ENCODE measurements at regions of chr2 and their contacts with region 1.

Region 1: DNA sequence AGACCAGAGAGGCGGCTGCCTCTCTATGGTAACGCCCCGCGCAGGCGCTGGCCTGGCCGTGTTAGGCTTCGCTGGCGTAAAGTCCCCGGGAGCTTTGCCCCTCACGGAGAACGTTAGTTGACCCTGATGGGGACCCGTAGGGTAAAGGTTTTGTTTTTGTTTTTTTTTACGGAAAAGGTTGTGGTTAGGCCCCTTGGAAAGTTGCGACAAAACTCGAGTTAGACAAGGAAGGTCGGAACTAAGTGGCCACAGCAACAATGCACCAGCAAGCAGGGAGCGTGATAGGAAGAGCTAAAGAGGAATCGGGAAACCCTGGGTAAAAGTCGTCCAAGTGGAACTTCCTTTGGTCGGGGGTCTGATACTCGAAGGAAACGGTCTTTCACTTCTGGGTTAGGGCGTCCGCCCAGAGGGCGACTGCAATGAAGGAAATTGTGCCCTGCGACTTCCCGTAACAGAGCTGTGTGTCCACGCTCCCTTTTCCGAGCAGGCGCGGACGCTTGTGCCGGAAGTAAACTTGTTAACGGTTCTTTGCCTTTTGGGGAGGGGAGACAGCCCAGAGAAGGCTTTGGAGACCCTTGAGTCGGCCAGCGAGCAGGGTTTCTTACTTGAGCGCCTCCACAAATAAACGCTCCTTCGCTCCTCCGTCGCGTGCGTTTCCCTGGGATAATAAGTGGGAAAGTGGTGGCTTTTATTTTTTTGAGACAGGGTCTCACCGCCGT is 493 bp upstream of the CLASP1 start:
- DNase-seq: peak; percentile 97 to 98 (median 97)
- H3K4me3 ChIP-seq: peak overlapping the region; percentile 78 to 95 (median 87)
- H3K4me3 Mint-ChIP-seq: peak overlapping the region; percentile 90 to 93
- H3K27ac ChIP-seq: peak overlapping the region; percentile 93 to 100
- H3K27ac Mint-ChIP-seq: peak overlapping the region; percentile 97 to 99 (median 99)
- H3K4me1 ChIP-seq: peaks cover 23 to 35% of the 10 kb centered on the region in 2 donors
- H3K4me1 Mint-ChIP-seq: peaks cover 54% of the 10 kb centered on the region
- H3K27me3 ChIP-seq: no peaks in the 10 kb centered on the region
- H3K27me3 Mint-ChIP-seq: peaks cover 0 to 1% (median 0%) of the 10 kb centered on the region in 3 donors
- CTCF ChIP-seq: no peak

Region 2: GRCh38 chr2:121596221-121597080 is 53.3 kb before region 1 on chr2:
- intact Hi-C with region 1: loop called in 1 of 2 experiments (anchors 5 kb)
- DNase-seq: peak; percentile 80 to 89 (median 84)
- H3K4me3 ChIP-seq: peak overlapping the region; percentile 31 to 88 (median 82)
- H3K4me3 Mint-ChIP-seq: peak overlapping the region; percentile 74 to 90
- H3K27ac ChIP-seq: peak overlapping the region; percentile 55 to 97
- H3K27ac Mint-ChIP-seq: peak overlapping the region; percentile 91 to 95 (median 95)
- H3K4me1 ChIP-seq: peaks cover 20 to 27% of the 10 kb centered on the region in 2 donors
- H3K4me1 Mint-ChIP-seq: peaks cover 33% of the 10 kb centered on the region
- H3K27me3 ChIP-seq: no peaks in the 10 kb centered on the region
- H3K27me3 Mint-ChIP-seq: no peaks in the 10 kb centered on the region
- CTCF ChIP-seq: peak; percentile 54

Region 3: DNA sequence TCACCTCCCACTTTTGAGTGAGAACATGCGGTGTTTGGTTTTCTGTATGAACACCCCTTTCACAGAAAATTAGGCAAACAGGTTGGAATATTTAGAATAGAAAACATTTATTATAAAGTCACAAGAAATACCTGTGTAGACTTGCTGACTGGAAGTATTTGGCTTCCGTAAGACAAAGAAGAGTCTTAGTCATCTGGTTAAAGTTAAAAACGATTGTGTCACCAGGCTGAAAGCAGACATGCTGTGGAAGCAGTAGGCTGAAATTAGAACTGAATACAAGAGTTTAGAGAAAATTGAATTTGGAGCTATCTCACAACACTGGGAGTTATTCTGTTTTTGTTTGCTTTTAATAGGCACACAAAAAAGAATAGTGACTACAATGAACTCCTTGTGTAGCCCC is 15.7 kb after region 1 on chr2:
- intact Hi-C with region 1: no loop called
- DNase-seq: no peak
- H3K4me3 ChIP-seq: no peak overlapping the region
- H3K4me3 Mint-ChIP-seq: no peak overlapping the region
- H3K27ac ChIP-seq: no peak overlapping the region
- H3K27ac Mint-ChIP-seq: no peak overlapping the region
- H3K4me1 ChIP-seq: no peaks in the 10 kb centered on the region
- H3K4me1 Mint-ChIP-seq: no peaks in the 10 kb centered on the region
- H3K27me3 ChIP-seq: no peaks in the 10 kb centered on the region
- H3K27me3 Mint-ChIP-seq: no peaks in the 10 kb centered on the region
- CTCF ChIP-seq: no peak

Region 4: GRCh38 chr2:121699421-121700333 is 49.9 kb after region 1 on chr2:
- intact Hi-C with region 1: loop called in 1 of 2 experiments (anchors 5 kb)
- DNase-seq: peak; percentile 91 to 94 (median 92)
- H3K4me3 ChIP-seq: peak overlapping the region; percentile 24 to 65 (median 28)
- H3K4me3 Mint-ChIP-seq: peak overlapping the region; percentile 79 to 90
- H3K27ac ChIP-seq: peak overlapping the region in 1 of 2 donors; percentile 69
- H3K27ac Mint-ChIP-seq: peak overlapping the region; percentile 66 to 94 (median 87)
- H3K4me1 ChIP-seq: peaks cover 26 to 27% of the 10 kb centered on the region in 2 donors
- H3K4me1 Mint-ChIP-seq: peaks cover 37% of the 10 kb centered on the region
- H3K27me3 ChIP-seq: no peaks in the 10 kb centered on the region
- H3K27me3 Mint-ChIP-seq: peaks cover 0 to 2% (median 1%) of the 10 kb centered on the region in 3 donors
- CTCF ChIP-seq: no peak

Region 5: DNA sequence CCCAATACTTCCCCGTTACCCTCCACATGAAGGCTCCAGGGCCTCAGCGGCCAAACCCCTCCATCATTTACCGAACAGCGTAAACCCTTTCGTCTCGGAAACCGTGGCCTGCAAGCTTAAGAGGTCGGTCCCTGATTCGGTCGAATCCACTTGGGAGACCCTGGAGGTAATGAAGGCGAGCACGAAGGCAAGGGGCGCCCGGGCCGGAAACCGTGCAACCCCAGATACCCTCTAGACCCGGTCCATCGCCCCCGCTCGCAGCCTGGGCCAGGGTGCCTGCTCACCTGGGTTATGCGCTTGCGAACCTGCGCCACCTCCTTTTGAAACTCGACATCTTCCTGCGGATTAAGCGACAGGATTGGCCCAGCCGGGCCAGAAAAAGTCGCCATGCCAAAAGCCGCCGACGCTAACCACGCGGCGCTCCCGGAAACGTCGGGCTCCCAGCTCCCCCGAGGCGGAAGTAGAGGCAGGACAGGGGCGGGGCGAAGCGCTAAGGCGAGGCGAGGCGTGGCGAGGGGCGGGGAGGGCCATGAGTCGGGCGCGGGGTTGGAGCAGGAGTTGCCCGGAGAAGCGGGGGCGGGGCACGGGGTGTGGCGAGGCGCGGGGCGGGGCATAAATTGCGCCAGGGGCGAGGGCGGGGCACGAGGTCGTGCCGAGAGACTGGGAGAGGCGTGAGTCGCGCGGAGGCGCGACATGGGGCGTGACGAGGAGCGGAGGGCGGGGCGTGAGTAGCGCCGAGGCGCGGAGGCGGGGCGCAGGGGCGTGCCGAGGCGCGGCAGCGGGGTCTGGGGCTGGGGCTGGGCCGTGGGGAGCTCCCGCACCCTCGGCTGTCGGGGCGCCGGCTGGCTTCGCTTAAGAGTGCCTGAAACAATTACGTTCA is 86.9 kb after region 1 on chr2 and contains the start of gene NIFK:
- intact Hi-C with region 1: loop called (anchors 5 to 10 kb)
- DNase-seq: peak; percentile 97 to 98 (median 98)
- H3K4me3 ChIP-seq: peak within 1 kb of the TSS; percentile 80 to 97 (median 90)
- H3K4me3 Mint-ChIP-seq: peak within 1 kb of the TSS; percentile 96 to 98
- H3K27ac ChIP-seq: peak within 1 kb of the TSS; percentile 72 to 97
- H3K27ac Mint-ChIP-seq: peak within 1 kb of the TSS; percentile 94 to 97 (median 96)
- H3K4me1 ChIP-seq: peaks cover 15 to 18% of the 10 kb centered on the region in 2 donors
- H3K4me1 Mint-ChIP-seq: peaks cover 35% of the 10 kb centered on the region
- H3K27me3 ChIP-seq: no peaks in the 10 kb centered on the region
- H3K27me3 Mint-ChIP-seq: peaks cover 0 to 6% (median 0%) of the 10 kb centered on the region in 3 donors
- CTCF ChIP-seq: no peak
- polyA plus RNA-seq, gene NIFK: 6.6 to 32.6 (median 30.6) TPM

Measured in CD14-positive monocyte (primary cell).